ENCODE measurements at regions of chr7 and their contacts with region 1.

Region 1: DNA sequence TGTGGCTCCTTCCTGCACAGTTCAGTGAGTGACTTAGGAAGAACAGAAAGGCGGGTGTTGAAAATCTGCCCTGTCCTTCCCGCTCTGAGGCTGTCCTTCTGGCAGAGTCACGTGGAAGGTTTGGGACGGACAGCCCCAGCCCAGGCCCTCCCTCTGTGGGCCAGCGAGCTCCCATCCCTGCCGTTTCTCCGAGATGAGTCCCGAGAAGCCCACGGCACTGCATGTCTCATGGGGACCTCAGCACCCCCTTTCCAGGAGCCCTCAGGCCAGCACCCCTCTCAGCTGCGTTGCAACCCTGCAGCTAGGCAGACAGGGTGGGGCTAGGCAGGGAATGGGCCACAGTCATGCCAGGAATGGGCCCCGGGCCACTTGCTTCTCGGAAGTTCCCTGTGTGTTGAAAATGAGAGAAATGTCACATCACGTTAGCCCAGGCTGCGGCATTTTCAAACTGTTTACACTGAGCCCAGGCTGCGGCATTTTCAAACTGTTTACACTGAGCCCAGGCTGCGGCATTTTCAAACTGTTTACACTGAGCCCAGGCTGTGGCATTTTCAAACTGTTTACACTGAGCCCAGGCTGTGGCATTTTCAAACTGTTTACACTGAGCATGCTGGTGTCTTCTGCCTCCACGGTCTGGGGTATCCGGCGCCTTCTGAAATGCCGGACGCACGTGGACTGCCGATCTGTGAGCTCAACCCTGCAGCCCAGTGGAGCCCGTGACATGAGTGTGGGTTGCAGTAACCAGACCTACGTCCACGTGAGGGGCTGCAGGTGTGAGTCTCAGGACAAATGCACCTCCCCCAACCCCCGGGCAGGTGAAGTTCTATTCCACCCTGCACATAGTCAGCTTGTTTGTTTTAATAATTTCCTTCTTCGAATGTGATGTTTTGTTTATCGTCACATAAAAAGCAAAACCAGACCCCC is 42.5 kb downstream of the FAM20C start:
- DNase-seq: no peak

Region 2: GRCh38 chr7:142248-142941 is 92.5 kb before region 1 on chr7:
- intact Hi-C with region 1: loop called (anchors 5 kb)
- DNase-seq: no peak